Activated naive CD4-positive, alpha-beta T cell treated with anti-CD3 and anti-CD28 coated beads for 36 hours (primary cell): ENCODE measurements at regions of chr9 and their contacts with region 1.

Region 1: GRCh38 chr9:20319641-20320337 is 302.5 kb downstream of the MLLT3 start:
- DNase-seq: peak; percentile 48
- H3K4me3 Mint-ChIP-seq: no peak overlapping the region
- H3K27ac Mint-ChIP-seq: peak overlapping the region; percentile 86
- H3K4me1 Mint-ChIP-seq: peaks cover 98% of the 10 kb centered on the region
- H3K27me3 Mint-ChIP-seq: no peaks in the 10 kb centered on the region

Region 2: DNA sequence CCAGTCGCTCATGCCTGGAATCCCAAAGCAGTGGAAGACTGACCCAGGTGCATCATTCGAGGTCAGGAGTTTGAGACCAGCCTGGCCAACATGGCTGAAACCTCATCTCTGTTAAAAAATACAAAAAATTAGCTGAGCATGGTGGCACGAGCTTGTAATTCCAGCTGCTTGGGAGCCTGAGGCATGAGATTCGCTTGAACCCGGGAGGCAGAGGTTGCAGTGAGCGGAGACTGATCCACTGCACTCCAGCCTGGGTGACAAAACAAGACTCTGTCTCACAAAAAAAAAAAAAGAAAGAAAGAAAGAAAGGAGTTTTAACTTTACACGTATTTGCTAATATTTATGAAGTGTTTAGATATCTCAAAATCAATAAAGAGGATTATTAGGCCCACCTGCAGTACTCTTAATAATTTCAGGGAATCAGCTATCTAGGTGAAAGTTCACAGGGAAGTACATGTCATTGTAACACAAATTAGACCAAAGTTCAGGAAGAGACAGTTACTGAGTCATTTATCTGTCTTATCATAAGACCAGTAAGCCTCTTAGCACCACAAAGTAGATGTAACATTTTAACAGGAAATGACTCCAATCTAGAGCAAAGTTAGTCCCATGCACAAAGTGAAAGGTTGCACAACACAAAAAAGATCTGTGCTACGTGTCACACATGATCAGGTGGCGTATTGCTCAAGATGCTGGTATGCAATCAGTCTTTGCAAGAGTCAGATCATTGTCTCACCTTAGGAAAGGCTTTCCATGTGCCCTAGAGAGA is 1158.3 kb before region 1 on chr9:
- CTCF ChIA-PET with region 1: no interaction called
- intact Hi-C with region 1: loop called (anchors 1 kb)
- DNase-seq: peak; percentile 87
- H3K4me3 Mint-ChIP-seq: no peak overlapping the region
- H3K27ac Mint-ChIP-seq: peak overlapping the region; percentile 81
- H3K4me1 Mint-ChIP-seq: peaks cover 23% of the 10 kb centered on the region
- H3K27me3 Mint-ChIP-seq: no peaks in the 10 kb centered on the region

Region 3: DNA sequence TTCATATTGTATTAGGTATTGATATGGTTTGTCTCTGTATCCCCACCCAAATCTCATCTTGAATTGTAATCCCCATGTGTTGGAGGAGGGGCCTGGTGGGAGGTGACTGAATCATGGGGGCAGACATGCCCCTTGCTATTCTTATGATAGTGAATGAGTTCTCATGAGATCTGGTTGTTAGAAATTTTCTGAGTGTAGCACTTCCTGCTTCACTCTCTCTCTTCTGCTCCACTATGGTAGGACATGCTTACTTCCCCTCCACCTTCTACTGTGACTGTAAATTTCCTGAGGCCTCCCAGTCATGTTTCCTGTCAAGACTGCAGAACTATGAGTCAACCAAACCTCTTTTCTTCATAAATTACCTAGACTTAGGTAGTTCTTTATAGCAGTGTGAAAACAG is 343.6 kb before region 1 on chr9:
- CTCF ChIA-PET with region 1: no interaction called
- intact Hi-C with region 1: loop called (anchors 1 kb)
- DNase-seq: peak; percentile 69
- H3K4me3 Mint-ChIP-seq: no peak overlapping the region
- H3K27ac Mint-ChIP-seq: peak overlapping the region; percentile 83
- H3K4me1 Mint-ChIP-seq: peaks cover 28% of the 10 kb centered on the region
- H3K27me3 Mint-ChIP-seq: no peaks in the 10 kb centered on the region

Region 4: DNA sequence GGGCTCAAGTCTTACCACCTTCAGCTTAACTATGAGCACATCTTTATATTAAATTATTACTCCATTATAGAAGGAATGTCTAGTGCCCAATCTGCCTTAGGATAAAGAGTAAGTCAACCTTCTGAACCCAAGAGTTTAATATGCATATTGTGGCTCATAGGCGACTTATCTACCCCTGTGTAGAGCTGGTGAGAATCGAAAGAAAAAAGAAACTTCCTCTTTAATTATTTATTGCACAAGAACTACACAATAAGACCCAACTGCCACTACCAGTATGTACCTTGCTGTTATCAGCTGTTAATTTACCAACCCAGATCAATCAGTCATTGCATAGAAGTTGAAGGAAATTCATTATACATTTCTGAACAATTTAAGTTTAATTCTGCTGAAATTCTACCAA is 201.8 kb before region 1 on chr9:
- CTCF ChIA-PET with region 1: no interaction called
- intact Hi-C with region 1: no loop called
- DNase-seq: no peak
- H3K4me3 Mint-ChIP-seq: no peak overlapping the region
- H3K27ac Mint-ChIP-seq: no peak overlapping the region
- H3K4me1 Mint-ChIP-seq: no peaks in the 10 kb centered on the region
- H3K27me3 Mint-ChIP-seq: no peaks in the 10 kb centered on the region

Region 5: DNA sequence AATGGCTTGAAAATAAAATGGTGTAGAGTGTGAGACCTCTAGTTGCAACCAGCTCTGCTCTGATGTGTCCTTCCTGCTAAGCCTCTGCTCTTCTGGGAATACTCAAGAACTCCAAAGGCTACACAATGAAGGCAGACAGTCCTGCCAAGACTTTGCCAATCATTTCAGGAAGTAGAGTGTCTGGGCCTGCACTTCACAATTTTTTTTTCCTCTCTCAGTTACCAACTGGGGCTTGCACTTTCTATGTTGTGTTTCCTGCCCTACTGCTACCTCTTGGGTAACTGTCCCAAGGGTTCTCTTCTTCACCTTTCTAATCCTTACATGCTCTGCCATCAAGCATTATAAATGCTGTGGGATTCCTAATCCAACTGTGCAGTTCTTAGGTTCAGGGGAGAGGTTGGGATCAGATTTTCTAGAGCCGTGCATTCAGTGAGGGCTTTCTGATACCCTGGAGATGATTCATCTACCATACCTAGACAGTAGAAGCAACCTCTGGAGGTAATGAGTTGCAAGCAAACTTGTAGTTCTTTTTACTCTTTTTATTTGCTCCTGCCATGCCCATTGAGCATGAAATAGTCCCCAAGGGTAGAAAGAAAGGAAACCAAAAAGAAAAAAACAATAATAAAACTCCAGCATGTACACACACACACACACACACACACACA is 63.4 kb before region 1 on chr9:
- CTCF ChIA-PET with region 1: no interaction called
- intact Hi-C with region 1: loop called (anchors 2 kb)
- DNase-seq: no peak
- H3K4me3 Mint-ChIP-seq: no peak overlapping the region
- H3K27ac Mint-ChIP-seq: no peak overlapping the region
- H3K4me1 Mint-ChIP-seq: peaks cover 38% of the 10 kb centered on the region
- H3K27me3 Mint-ChIP-seq: no peaks in the 10 kb centered on the region

Region 6: DNA sequence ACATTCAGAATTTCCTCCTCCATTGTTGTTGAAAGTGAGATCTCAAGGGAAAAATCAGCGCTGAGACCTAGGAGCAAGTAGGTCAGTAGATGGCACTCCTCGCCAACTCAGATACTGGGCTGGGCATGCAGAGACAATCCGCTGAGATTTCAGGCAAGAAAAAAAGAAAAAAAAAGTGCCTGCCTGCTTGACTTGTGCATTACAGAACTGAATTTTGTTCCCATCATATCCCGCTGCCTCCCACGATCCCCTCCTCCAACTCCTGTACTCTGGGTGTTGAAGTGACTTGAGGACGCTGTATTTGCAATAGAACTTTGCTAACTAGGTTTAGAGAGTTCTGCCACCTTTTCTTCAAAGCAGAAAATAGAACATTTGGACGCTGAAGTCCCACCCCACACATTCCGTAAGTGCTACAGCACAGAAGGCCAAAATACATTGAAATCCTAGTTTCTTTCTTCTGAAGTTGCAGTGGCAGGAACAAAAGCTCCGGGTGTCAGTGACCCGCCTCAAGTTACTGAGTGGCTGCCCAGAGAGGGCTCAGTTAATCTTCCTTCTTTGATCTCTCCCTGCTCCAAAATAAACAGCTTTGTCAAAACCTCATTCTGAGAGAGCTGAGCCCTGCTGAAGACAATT is 36.7 kb after region 1 on chr9:
- CTCF ChIA-PET with region 1: interaction called, 11 read pairs
- intact Hi-C with region 1: loop called (anchors 1 kb)
- DNase-seq: peak; percentile 85
- H3K4me3 Mint-ChIP-seq: no peak overlapping the region
- H3K27ac Mint-ChIP-seq: peak overlapping the region; percentile 46
- H3K4me1 Mint-ChIP-seq: peaks cover 72% of the 10 kb centered on the region
- H3K27me3 Mint-ChIP-seq: no peaks in the 10 kb centered on the region

Region 7: GRCh38 chr9:20684035-20684872 is 364.5 kb after region 1 on chr9 and contains the start of gene FOCAD:
- CTCF ChIA-PET with region 1: no interaction called
- intact Hi-C with region 1: loop called (anchors 1 kb)
- DNase-seq: peak; percentile 95
- H3K4me3 Mint-ChIP-seq: peak within 1 kb of the TSS; percentile 88
- H3K27ac Mint-ChIP-seq: peak within 1 kb of the TSS; percentile 76
- H3K4me1 Mint-ChIP-seq: peaks cover 17% of the 10 kb centered on the region
- H3K27me3 Mint-ChIP-seq: no peaks in the 10 kb centered on the region
- total RNA-seq, gene FOCAD: 31.7 to 32.2 TPM

Region 8: DNA sequence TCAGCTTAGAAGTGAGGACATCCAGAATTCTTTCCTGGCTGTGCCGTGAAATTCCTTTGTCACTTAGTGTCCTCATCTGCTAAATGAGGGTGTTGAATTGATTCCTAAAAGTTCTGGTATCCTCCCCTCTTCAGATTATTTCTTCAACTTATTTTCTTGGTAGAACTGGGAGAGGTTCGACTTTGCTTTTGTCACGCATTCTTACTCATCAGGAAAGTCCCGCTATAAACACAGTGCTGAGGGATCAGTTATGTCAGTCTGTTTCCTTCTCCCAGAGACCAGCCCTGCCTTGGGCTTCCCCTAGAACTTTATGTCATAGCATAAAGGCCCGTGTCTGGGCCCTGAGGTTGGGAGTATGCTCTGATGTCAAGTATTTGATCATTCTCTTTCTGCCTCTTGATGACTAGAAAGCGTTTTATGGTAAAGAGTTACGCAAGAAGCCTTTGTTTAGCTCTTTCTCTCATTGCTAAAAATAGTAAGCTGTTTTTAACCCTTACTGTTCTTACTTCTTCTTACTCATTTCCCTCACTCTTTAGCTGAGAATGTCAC is 1512.2 kb after region 1 on chr9:
- CTCF ChIA-PET with region 1: no interaction called
- intact Hi-C with region 1: loop called (anchors 10 kb)
- DNase-seq: peak; percentile 83
- H3K4me3 Mint-ChIP-seq: no peak overlapping the region
- H3K27ac Mint-ChIP-seq: peak overlapping the region; percentile 77
- H3K4me1 Mint-ChIP-seq: peaks cover 65% of the 10 kb centered on the region
- H3K27me3 Mint-ChIP-seq: no peaks in the 10 kb centered on the region